PC-9 (cell line): ENCODE measurements at regions of chr16 and their contacts with region 1.

Region 1: GRCh38 chr16:56700195-56700594 is 17.9 kb downstream of the MT1X start:
- DNase-seq: no peak
- H3K4me3 ChIP-seq: no peak overlapping the region
- H3K27ac ChIP-seq: no peak overlapping the region
- H3K4me1 ChIP-seq: peaks cover 13% of the 10 kb centered on the region
- H3K27me3 ChIP-seq: no peaks in the 10 kb centered on the region
- CTCF ChIP-seq: no peak

Region 2: DNA sequence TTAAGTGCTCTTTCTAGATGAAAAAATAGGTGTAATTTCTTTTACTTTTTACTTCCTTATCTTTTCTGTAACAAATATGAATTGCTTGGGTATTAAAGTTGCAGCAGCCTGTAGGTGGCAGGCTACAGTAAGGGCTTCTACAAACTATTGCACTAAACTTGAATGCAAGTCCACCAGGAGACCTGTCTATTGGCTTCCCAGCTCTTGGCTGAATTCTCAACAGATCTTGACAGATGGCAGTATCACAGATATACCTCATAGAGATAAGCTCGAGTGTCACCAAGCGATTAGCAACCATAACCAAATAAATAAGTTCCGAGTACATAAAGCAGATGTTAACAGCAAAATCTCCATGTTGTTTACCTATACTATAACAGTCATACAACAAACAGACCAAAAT is 186.2 kb before region 1 on chr16:
- CTCF ChIA-PET with region 1: interaction called, 7 read pairs
- POLR2A ChIA-PET with region 1: no interaction called
- intact Hi-C with region 1: loop called (anchors 1 kb)
- DNase-seq: peak; percentile 31 to 62
- H3K4me3 ChIP-seq: no peak overlapping the region
- H3K27ac ChIP-seq: no peak overlapping the region
- H3K4me1 ChIP-seq: peaks cover 20% of the 10 kb centered on the region
- H3K27me3 ChIP-seq: no peaks in the 10 kb centered on the region
- CTCF ChIP-seq: peak; percentile 74

Region 3: GRCh38 chr16:56600398-56600999 is 99.7 kb before region 1 on chr16:
- CTCF ChIA-PET with region 1: interaction called, 21 read pairs
- POLR2A ChIA-PET with region 1: interaction called, 11 read pairs
- intact Hi-C with region 1: no loop called
- DNase-seq: peak in 1 of 2 experiments; percentile 48
- H3K4me3 ChIP-seq: no peak overlapping the region
- H3K27ac ChIP-seq: no peak overlapping the region
- H3K4me1 ChIP-seq: peaks cover 19% of the 10 kb centered on the region
- H3K27me3 ChIP-seq: no peaks in the 10 kb centered on the region
- CTCF ChIP-seq: peak; percentile 86

Region 4: GRCh38 chr16:56643080-56643778 is 57.0 kb before region 1 on chr16:
- CTCF ChIA-PET with region 1: interaction called, 13 read pairs
- POLR2A ChIA-PET with region 1: interaction called, 4 read pairs
- intact Hi-C with region 1: no loop called
- DNase-seq: peak; percentile 69 to 79
- H3K4me3 ChIP-seq: peak overlapping the region; percentile 32; the same call in 1 of the 2 replicates
- H3K27ac ChIP-seq: no peak overlapping the region
- H3K4me1 ChIP-seq: peaks cover 34% of the 10 kb centered on the region
- H3K27me3 ChIP-seq: no peaks in the 10 kb centered on the region
- CTCF ChIP-seq: peak; percentile 54